ENCODE measurements at regions of chr18 and their contacts with region 1.

Region 1: GRCh38 chr18:70116949-70117348 is 88.5 kb downstream of the RTTN start:
- DNase-seq: peak in 1 of 2 experiments; percentile 35
- H3K4me3 ChIP-seq: no peak overlapping the region
- H3K27ac ChIP-seq: no peak overlapping the region
- H3K4me1 ChIP-seq: no peaks in the 10 kb centered on the region
- H3K27me3 ChIP-seq: no peaks in the 10 kb centered on the region
- CTCF ChIP-seq: no peak

Region 2: DNA sequence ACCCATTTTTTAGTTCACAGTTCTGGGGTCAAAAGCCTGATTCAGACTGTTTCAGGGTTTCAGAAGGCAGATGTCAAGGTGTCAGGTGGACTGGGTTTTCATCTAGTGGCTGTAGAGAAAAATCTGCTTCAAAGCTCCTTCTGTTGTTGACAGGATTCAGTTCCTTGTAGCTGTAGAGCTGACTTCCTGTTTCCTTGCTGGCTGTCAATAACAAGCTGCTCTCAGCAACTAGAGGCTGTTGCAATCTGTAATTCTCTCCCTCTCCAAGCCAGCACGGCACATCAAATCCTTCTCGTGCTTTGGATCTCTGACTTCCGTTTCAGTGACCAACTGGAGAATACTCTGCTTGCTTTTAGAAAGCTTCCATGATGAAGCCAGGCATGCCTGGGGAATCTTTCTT is 536.8 kb before region 1 on chr18:
- CTCF ChIA-PET with region 1: no interaction called
- POLR2A ChIA-PET with region 1: interaction called, 10 read pairs
- intact Hi-C with region 1: no loop called
- DNase-seq: no peak
- H3K4me3 ChIP-seq: no peak overlapping the region
- H3K27ac ChIP-seq: no peak overlapping the region
- H3K4me1 ChIP-seq: no peaks in the 10 kb centered on the region
- H3K27me3 ChIP-seq: no peaks in the 10 kb centered on the region
- CTCF ChIP-seq: no peak